ENCODE measurements at regions of chr13 and their contacts with region 1.

Region 1: DNA sequence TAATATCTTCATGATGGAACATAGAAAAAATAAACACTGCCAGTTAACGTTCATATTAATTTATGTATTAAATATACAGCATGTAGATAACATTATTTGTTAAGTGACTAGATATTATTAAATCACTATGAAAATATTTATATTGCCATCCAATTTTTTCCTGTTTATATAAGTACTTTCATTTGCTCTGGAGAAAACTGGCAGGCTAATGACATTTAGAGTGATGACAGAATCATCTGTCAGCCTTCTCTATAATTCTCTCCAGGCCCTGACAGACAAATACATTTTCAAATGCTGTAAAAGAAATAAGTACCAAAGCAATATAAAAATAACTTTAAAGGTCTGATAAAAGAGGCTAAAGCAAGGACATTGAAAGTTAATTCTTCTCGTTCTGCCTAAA is 2556.7 kb upstream of the PCDH20 start:
- DNase-seq: no peak
- ATAC-seq: no peak
- H3K4me3 ChIP-seq: no peak overlapping the region
- H3K4me3 Mint-ChIP-seq: no peak overlapping the region
- H3K27ac ChIP-seq: no peak overlapping the region
- H3K27ac Mint-ChIP-seq: no peak overlapping the region
- H3K4me1 ChIP-seq: no peaks in the 10 kb centered on the region
- H3K4me1 Mint-ChIP-seq: no peaks in the 10 kb centered on the region
- H3K27me3 ChIP-seq: no peaks in the 10 kb centered on the region
- H3K27me3 Mint-ChIP-seq: no peaks in the 10 kb centered on the region

Region 2: DNA sequence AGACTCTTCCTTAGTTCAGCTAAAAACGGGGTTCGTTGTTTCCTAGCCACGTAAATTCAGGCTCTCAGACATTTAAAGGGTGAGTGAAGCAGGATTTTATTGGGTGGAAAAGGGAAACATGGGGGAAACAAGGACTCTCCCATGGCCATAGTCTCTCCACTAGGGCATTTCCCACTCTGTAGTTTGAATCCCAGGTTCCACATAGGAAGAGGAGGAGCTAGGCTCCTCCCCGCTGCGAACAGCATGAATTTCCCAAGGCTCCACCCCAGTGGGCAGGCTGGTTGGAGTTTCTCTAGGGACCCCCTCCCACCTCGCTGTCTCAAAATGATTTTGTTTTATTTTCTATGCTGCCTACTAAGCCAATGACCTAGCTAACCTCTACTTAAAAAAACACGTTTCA is 385.9 kb before region 1 on chr13:
- CTCF ChIA-PET with region 1: interaction called in 1 of 2 experiments, 12 read pairs
- POLR2A ChIA-PET with region 1: no interaction called
- DNase-seq: no peak
- ATAC-seq: no peak
- H3K4me3 ChIP-seq: no peak overlapping the region
- H3K4me3 Mint-ChIP-seq: no peak overlapping the region
- H3K27ac ChIP-seq: no peak overlapping the region
- H3K27ac Mint-ChIP-seq: no peak overlapping the region
- H3K4me1 ChIP-seq: no peaks in the 10 kb centered on the region
- H3K4me1 Mint-ChIP-seq: no peaks in the 10 kb centered on the region
- H3K27me3 ChIP-seq: no peaks in the 10 kb centered on the region
- H3K27me3 Mint-ChIP-seq: no peaks in the 10 kb centered on the region

Region 3: DNA sequence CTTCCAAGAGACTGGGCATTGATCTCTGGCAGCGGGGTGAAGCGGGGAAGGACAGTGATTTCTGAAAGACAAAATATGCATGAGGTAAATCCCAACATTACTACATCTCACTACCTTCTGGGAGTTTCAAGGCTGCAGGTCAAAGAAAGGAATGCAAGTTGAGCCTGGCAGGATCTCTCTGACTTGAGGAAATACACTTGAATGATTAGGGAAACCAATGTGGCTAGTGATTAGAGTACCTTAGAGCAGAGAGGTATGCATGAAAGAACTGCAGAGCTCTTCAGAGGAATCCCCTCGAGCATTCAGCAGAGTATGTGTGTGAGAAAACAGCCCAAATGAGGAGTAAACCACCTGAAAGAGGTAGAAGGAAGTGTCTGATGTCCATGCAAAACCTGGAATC is 317.4 kb after region 1 on chr13:
- CTCF ChIA-PET with region 1: no interaction called
- POLR2A ChIA-PET with region 1: no interaction called
- DNase-seq: no peak
- ATAC-seq: no peak
- H3K4me3 ChIP-seq: no peak overlapping the region
- H3K4me3 Mint-ChIP-seq: no peak overlapping the region
- H3K27ac ChIP-seq: no peak overlapping the region
- H3K27ac Mint-ChIP-seq: no peak overlapping the region
- H3K4me1 ChIP-seq: no peaks in the 10 kb centered on the region
- H3K4me1 Mint-ChIP-seq: no peaks in the 10 kb centered on the region
- H3K27me3 ChIP-seq: no peaks in the 10 kb centered on the region
- H3K27me3 Mint-ChIP-seq: no peaks in the 10 kb centered on the region